ENCODE measurements at regions of chr17 and their contacts with region 1.

Region 1: DNA sequence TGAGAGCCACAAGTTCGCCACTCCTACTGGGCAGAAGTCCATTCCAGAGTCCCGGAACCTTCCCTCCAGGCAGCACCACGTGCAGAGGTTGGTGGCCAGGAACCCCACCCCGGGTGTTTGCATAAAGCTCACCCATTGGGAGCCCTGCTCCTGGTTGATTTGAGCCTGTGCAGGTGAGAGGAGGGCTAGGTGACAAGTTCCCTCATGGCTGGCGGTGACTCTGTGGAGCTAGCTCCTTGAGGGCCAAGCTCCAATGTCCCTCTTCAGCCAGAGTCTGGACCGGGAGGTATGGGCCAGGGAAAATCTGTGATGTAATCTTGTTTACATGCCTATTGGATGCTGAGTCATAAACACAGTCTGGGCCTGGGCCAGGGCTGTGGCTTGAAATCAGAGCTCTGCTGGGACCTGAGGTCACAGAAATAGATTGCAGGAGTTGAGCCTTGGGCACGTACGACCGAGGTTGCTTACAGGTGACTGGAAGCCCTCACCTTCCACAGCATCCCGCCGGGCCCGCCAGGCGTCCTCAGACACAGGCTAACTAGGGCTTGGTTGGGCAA is 118.9 kb downstream of the AATF start:
- DNase-seq: peak; percentile 84 to 94
- H3K4me3 ChIP-seq: peak overlapping the region; percentile 5; the same call in 1 of the 2 replicates
- H3K27ac ChIP-seq: peak overlapping the region; percentile 6; the same call in 1 of the 2 replicates
- H3K4me1 ChIP-seq: peaks cover 23% of the 10 kb centered on the region
- H3K27me3 ChIP-seq: no peaks in the 10 kb centered on the region
- CTCF ChIP-seq: no peak

Region 2: DNA sequence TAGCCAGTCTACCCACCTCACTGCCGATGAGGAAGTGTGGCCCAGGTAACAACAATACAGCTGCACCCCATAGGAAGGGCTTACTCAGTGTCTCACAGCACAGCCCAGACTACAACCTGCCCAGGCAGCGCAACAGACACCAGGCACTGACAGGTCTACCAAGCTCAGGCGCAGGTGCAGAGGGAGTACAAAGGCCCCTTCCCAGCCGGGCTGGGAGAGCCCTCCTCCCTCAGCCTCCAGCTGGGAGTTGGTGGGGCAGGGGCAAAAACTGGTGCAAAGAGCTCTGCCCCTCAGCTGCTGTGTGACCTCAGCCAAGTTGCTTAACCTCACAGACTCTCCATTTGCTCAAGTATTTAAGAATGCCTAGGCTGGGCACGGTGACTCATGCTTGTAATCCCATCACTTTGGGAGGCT is 242.9 kb before region 1 on chr17:
- CTCF ChIA-PET with region 1: no interaction called
- POLR2A ChIA-PET with region 1: interaction called, 13 read pairs
- intact Hi-C with region 1: no loop called
- DNase-seq: no peak
- H3K4me3 ChIP-seq: no peak overlapping the region
- H3K27ac ChIP-seq: no peak overlapping the region
- H3K4me1 ChIP-seq: no peaks in the 10 kb centered on the region
- H3K27me3 ChIP-seq: peaks cover 8% of the 10 kb centered on the region; the same call in 1 of the 2 replicates
- CTCF ChIP-seq: no peak

Region 3: DNA sequence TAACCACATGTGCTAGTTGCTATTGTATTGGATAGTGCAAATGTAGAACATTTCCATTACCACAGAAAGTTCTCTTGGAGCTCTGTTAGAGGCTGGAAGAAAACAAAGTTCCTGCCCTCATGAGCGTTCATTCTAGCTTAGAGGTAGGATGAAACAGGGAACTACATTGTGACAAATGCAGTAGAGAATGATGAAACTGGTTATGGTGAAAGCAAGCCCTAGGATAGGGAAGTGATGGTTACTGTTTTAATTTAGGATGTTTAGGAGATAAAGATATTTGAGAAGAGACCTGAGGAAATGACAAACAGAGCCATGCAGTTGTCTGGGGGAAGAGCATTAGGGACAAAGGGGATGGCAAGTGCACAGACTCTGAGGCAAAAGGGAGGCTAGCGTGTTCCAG is 68.2 kb before region 1 on chr17:
- CTCF ChIA-PET with region 1: no interaction called
- POLR2A ChIA-PET with region 1: no interaction called
- intact Hi-C with region 1: no loop called
- DNase-seq: no peak
- H3K4me3 ChIP-seq: no peak overlapping the region
- H3K27ac ChIP-seq: no peak overlapping the region
- H3K4me1 ChIP-seq: no peaks in the 10 kb centered on the region
- H3K27me3 ChIP-seq: no peaks in the 10 kb centered on the region
- CTCF ChIP-seq: no peak

Region 4: DNA sequence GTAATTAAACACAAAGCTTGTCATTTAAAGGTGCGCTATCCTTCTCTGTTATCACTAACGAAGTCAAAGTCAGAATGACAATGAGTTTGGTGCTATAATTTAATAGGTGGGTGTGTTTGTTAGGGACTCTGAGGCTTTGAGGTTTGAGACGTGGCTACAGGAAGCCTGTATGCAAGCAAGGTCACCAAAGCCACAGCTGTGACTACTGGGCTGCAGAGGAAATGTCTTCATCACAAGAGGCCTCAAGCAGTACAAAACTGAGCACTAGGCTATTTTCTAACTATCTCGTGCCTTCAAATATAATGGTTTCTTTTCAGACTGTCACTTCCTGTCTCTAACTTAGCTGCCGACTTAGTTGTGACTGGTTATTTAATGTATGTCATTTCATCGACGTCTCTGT is 22.3 kb after region 1 on chr17:
- CTCF ChIA-PET with region 1: no interaction called
- POLR2A ChIA-PET with region 1: interaction called, 26 read pairs
- intact Hi-C with region 1: no loop called
- DNase-seq: no peak
- H3K4me3 ChIP-seq: no peak overlapping the region
- H3K27ac ChIP-seq: no peak overlapping the region
- H3K4me1 ChIP-seq: peaks cover 11% of the 10 kb centered on the region
- H3K27me3 ChIP-seq: no peaks in the 10 kb centered on the region
- CTCF ChIP-seq: no peak

Measured in PC-9 (cell line).